Activated CD4-positive, alpha-beta T cell treated with anti-CD3 and anti-CD28 coated beads for 36 hours (primary cell): ENCODE measurements at regions of chr19 and their contacts with region 1.

Region 1: DNA sequence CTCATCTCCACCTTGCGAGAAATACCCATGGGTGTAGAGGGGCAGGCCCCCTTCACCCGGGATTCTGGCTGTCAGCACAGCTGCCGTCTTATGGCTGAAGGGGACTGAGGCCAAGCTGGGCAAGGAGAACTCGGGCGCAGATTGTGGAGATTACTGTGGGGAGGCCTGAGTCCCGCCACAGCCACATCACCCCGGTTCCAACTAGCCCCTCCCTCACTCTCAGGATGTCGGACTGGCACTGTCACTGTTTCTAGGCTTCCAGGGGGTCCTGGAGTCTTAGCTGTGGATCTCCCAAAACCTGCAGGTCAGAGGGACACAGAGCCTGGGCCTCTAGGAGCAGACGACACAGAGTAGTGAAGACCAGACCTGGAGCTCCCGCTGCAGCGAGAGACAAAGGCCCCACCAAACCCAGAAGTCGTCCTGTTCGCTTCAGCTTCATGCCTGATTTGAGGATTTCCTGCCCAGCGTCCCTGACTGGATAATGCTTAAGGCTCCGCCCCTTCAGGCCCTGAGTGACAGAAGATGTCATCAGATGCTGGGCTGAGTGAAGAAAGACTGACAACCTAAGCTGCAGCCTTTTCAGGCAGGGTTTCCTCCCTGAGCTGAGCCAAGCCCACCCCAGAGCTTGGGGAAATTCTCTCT is 55.8 kb downstream of the ZNF93 start:
- DNase-seq: peak; percentile 24
- ATAC-seq: no peak
- H3K4me3 Mint-ChIP-seq: no peak overlapping the region
- H3K27ac Mint-ChIP-seq: no peak overlapping the region
- H3K4me1 Mint-ChIP-seq: no peaks in the 10 kb centered on the region
- H3K27me3 Mint-ChIP-seq: no peaks in the 10 kb centered on the region

Region 2: DNA sequence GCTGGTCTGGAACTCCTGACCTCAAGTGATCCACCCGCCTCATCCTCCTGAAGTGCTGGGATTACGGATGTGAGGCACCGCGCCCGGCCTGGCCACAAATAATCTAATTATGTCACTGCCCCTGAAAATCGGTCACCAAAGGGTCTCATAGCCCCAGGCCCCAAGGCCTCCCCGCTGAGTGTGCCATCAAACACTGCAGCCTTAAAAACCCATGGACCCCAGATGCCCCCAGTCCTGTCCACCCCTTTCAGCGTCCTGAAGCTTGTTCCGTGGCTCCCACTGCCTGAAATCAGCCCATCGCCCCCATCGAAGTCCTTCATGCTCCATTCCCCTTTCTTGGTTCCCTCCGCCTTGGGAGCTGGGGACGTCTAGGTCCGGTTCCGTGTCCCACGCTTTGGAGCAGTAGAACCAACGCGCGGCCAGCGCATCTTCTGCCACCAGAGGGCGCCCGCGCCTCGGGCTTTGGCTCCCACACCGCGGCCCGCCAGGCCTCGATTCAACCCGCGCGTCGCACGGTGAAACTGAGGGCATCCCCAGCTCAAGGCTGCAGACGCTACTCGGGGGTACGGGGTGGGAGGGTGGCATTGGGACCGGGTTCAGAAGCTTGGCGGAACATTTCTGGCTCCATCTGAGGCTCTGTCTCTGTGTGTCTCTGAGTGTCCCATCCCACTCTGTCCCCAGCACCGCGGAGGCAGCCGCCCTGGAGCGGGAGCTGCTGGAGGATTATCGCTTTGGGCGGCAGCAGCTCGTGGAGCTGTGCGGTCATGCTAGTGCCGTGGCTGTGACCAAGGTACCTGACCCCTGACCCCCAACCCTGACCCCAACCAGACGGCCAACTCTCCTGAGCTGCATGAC is 424.4 kb before region 1 on chr19:
- CTCF ChIA-PET with region 1: interaction called, 5 read pairs
- POLR2A ChIA-PET with region 1: no interaction called
- intact Hi-C with region 1: loop called (anchors 1 to 2 kb)
- DNase-seq: peak; percentile 92
- ATAC-seq: peak; percentile 87
- H3K4me3 Mint-ChIP-seq: no peak overlapping the region
- H3K27ac Mint-ChIP-seq: no peak overlapping the region
- H3K4me1 Mint-ChIP-seq: peaks cover 10% of the 10 kb centered on the region
- H3K27me3 Mint-ChIP-seq: no peaks in the 10 kb centered on the region